ENCODE measurements at regions of chrX and their contacts with region 1.

Region 1: GRCh38 chrX:15464704-15465103 is 28.4 kb downstream of the PIR start:
- DNase-seq: no peak
- H3K4me3 ChIP-seq: no peak overlapping the region
- H3K27ac ChIP-seq: no peak overlapping the region
- H3K4me1 ChIP-seq: peaks cover 5% of the 10 kb centered on the region
- H3K27me3 ChIP-seq: no peaks in the 10 kb centered on the region
- CTCF ChIP-seq: no peak

Region 2: DNA sequence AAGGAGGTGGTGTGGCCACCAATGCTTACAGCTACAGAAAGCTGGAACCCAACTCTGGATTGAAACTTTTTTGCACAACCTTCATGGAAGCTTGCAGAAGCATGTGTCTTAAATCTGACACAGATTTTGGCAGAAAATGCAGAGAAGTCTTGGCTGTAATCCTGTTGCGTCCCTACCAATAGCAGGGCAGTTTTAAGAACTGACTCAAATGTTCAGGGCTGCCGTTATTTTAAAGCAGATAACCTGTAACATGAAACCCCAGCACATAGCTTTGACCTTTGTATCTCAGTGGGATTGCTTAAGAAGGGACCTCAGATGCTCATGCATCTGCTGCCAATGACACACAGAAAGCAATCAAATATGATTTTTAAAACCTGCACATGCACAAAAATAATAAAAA is 80.4 kb before region 1 on chrX and contains the start of gene VEGFD:
- CTCF ChIA-PET with region 1: no interaction called
- dilution Hi-C with region 1: loop called (anchors 5 kb)
- in situ Hi-C with region 1: no loop called
- intact Hi-C with region 1: no loop called
- DNase-seq: no peak
- H3K4me3 ChIP-seq: no peak within 1 kb of the TSS
- H3K27ac ChIP-seq: no peak within 1 kb of the TSS
- H3K4me1 ChIP-seq: no peaks in the 10 kb centered on the region
- H3K27me3 ChIP-seq: no peaks in the 10 kb centered on the region
- CTCF ChIP-seq: no peak
- total RNA-seq, gene VEGFD: under 0.01 to 0.28 TPM